Heart right ventricle (tissue), 16 donors: ENCODE measurements at regions of chr4 and their contacts with region 1.

Region 1: GRCh38 chr4:8176547-8177399 is 18.2 kb upstream of the ABLIM2 start:
- DNase-seq: peak in 1 of 2 donors; percentile 51
- ATAC-seq: peak; percentile 71 to 88 (median 80)
- H3K4me3 ChIP-seq: no peak overlapping the region
- H3K27ac ChIP-seq: peak overlapping the region in 1 of 10 donors; percentile 12
- H3K4me1 ChIP-seq: peaks cover 5 to 35% (median 24%) of the 10 kb centered on the region in 9 donors
- H3K27me3 ChIP-seq: peaks cover 0 to 11% (median 0%) of the 10 kb centered on the region in 7 donors
- CTCF ChIP-seq: peak; percentile 75 to 91 (median 84)

Region 2: GRCh38 chr4:8409264-8410065 is 232.7 kb after region 1 on chr4:
- intact Hi-C with region 1: loop called in 9 of 10 experiments (anchors 5 to 10 kb)
- DNase-seq: peak; percentile 47 to 62
- ATAC-seq: peak; percentile 46 to 80 (median 72)
- H3K4me3 ChIP-seq: no peak overlapping the region
- H3K27ac ChIP-seq: no peak overlapping the region
- H3K4me1 ChIP-seq: peaks cover 0 to 38% (median 18%) of the 10 kb centered on the region in 9 donors
- H3K27me3 ChIP-seq: no peaks in the 10 kb centered on the region
- CTCF ChIP-seq: no peak